Transverse colon (tissue), 4 donors: ENCODE measurements at regions of chr13 and their contacts with region 1.

Region 1: GRCh38 chr13:42110410-42111155 is 62.1 kb downstream of the DGKH start:
- DNase-seq: no peak
- H3K4me3 ChIP-seq: no peak overlapping the region
- H3K27ac ChIP-seq: no peak overlapping the region
- H3K4me1 ChIP-seq: no peaks in the 10 kb centered on the region
- H3K27me3 ChIP-seq: no peaks in the 10 kb centered on the region
- CTCF ChIP-seq: peak; percentile 82 to 86 (median 85)
- EP300 ChIP-seq: no peak
- POLR2A ChIP-seq: no peak

Region 2: DNA sequence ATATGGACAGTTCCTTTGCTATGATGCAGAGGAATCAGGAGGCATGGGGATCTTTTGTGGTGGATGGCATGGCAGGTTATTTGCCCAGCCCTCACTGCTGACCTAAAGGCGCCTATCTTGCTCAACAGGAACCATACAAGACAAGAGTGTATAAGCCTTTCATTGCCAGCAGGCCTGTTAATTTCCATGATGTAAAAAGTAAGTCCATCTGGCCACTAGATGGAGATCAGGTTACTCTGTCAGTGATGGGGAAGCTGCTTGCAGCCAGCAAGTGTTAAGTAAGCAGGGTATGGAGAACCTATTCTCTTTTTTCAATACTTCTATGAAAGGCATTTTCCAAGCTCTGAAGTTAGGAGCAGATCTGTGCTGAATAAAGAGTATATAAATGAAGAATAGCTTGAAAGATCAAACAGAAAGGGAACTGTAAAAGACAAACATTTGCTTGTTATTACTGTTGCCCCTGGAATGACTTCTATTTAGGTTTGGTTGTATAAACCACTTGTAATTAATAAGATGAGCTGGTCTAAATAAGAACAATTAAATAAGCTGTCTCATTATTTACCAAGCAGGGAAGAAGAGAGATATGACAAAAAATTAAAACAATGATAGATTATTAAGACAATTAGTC is 442.3 kb before region 1 on chr13:
- in situ Hi-C with region 1: loop called (anchors 5 to 25 kb)
- intact Hi-C with region 1: no loop called
- DNase-seq: peak; percentile 28
- H3K4me3 ChIP-seq: no peak overlapping the region
- H3K27ac ChIP-seq: no peak overlapping the region
- H3K4me1 ChIP-seq: no peaks in the 10 kb centered on the region
- H3K27me3 ChIP-seq: no peaks in the 10 kb centered on the region
- CTCF ChIP-seq: peak; percentile 67 to 83 (median 72)
- EP300 ChIP-seq: no peak
- POLR2A ChIP-seq: no peak

Region 3: DNA sequence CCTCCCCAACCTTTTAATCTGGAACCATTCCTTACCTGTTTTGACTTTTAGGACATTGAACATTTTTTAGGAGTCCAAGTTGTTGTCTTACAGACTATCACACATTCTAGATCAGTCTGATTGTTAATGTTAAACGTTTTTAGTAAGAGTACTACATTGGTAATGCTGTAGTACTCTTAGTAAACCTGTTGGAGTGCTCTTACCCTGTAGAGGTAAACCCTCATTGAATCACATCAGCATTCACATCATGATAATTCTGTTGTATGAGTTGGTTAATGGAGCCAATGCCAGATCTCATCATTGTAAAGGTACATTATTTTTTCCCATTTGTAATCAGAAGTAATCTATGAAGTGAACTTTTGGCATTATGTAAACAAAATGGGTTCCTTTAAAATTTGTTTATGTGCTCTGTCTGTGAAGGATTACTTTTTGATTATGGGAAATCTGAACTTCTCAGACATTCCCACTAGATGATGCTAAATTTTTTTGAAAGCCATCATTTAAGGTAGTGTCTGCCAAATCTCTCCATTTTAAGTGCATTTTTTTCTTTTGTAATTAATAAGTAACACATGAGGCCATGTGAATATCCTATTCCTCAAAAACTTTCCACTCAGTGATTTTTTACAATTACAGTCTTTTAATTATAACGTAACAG is 204.9 kb before region 1 on chr13:
- in situ Hi-C with region 1: loop called in 1 of 4 experiments (anchors 25 kb)
- intact Hi-C with region 1: no loop called
- DNase-seq: no peak
- H3K4me3 ChIP-seq: no peak overlapping the region
- H3K27ac ChIP-seq: no peak overlapping the region
- H3K4me1 ChIP-seq: no peaks in the 10 kb centered on the region
- H3K27me3 ChIP-seq: no peaks in the 10 kb centered on the region
- CTCF ChIP-seq: peak; percentile 44 to 64 (median 53)
- EP300 ChIP-seq: no peak
- POLR2A ChIP-seq: no peak

Region 4: GRCh38 chr13:41942462-41943094 is 168.0 kb before region 1 on chr13:
- in situ Hi-C with region 1: no loop called
- intact Hi-C with region 1: no loop called
- DNase-seq: no peak
- H3K4me3 ChIP-seq: no peak overlapping the region
- H3K27ac ChIP-seq: no peak overlapping the region
- H3K4me1 ChIP-seq: no peaks in the 10 kb centered on the region
- H3K27me3 ChIP-seq: no peaks in the 10 kb centered on the region
- CTCF ChIP-seq: no peak
- EP300 ChIP-seq: no peak
- POLR2A ChIP-seq: no peak